MCF 10A (cell line): ENCODE measurements at regions of chr17 and their contacts with region 1.

Region 1: DNA sequence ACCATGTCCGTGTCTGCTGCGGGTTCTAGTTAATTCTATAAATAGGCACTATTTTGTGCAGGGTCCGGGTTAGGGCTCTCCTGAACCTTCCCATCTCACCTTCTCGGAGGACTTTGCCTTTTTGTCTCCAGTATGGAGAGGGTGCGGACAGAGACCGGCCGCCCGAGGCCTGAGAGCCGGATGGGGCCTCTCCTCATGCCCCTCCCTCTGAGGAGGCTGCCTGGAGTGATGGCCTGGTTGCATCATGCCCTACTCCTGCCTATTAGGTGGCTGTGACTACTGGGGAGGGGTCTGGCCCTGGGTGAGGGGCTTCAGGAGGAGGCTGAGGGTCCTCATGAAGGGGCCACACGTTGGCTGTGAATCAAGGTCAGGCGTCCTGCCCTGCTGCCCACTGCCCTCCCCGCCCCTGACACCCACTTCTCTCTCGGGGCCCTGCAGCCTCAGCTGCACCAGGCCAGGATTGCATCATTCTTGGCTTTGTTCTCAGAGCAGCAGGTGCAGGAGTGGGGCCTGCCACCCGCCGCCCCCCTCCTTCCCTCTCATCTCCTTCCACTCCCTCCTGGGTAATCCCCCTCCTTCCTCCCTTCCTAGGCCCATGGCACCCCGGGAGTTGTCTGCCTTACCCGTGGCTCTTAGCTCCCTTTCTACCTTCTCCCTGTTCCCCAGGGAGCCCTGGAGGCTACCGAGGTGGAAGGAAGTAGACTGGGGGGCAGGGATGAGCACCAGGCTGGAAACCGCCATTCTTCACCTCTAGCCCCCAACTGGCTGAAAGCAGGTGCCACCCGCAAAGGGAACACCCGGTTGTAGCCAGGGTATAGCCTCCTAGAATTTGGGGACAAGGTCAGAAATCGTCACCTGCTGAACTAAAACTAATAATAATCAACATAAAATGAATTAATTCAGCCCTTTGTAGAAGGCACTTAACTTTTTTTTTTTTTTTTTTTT is 12.7 kb upstream of the ARHGAP23 start:
- DNase-seq: peak; percentile 70
- H3K4me3 Mint-ChIP-seq: peak overlapping the region; percentile 47
- H3K27ac Mint-ChIP-seq: no peak overlapping the region
- H3K4me1 Mint-ChIP-seq: peaks cover 14% of the 10 kb centered on the region
- H3K27me3 Mint-ChIP-seq: peaks cover 21% of the 10 kb centered on the region
- CTCF ChIP-seq: no peak

Region 2: DNA sequence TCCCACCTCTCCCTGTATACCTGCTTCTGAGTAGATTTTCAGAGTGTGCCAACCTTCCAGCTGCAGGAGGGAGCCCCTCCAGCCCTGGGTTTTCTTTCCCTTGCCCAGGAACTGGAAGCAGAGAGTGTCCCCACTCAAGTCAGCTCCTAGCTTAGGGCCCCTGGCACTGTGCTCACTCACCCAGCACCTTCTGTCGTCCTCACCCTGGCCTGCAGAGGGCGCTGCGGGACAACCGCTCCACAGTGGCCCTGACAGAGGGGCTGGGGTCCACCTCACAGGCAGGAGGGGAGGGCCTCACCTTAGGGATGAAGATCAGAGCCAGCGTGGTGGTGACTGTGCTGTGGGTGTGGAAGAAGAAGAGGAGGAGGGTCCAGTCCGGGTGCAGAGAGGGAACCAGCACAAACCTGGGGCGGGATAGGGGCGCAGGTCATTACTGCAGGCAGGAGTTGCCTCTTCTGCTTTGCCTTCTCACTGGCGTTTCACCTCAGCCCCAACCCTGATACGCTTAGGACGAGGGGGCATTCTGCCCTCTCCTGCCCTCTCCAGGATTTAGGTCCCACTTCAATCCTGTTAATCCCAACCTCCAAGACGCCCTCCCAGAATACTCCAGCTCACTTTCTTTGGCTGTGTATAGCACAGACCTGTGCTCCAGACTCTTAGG is 81.8 kb before region 1 on chr17:
- CTCF ChIA-PET with region 1: interaction called, 12 read pairs
- POLR2A ChIA-PET with region 1: no interaction called
- intact Hi-C with region 1: no loop called
- DNase-seq: peak; percentile 54
- H3K4me3 Mint-ChIP-seq: no peak overlapping the region
- H3K27ac Mint-ChIP-seq: peak overlapping the region; percentile 3
- H3K4me1 Mint-ChIP-seq: peaks cover 3% of the 10 kb centered on the region
- H3K27me3 Mint-ChIP-seq: peaks cover 12% of the 10 kb centered on the region
- CTCF ChIP-seq: peak; percentile 73

Region 3: GRCh38 chr17:38341035-38341721 is 74.3 kb before region 1 on chr17:
- CTCF ChIA-PET with region 1: interaction called, 114 read pairs
- POLR2A ChIA-PET with region 1: no interaction called
- intact Hi-C with region 1: no loop called
- DNase-seq: peak; percentile 44
- H3K4me3 Mint-ChIP-seq: no peak overlapping the region
- H3K27ac Mint-ChIP-seq: no peak overlapping the region
- H3K4me1 Mint-ChIP-seq: no peaks in the 10 kb centered on the region
- H3K27me3 Mint-ChIP-seq: peaks cover 10% of the 10 kb centered on the region
- CTCF ChIP-seq: no peak

Region 4: DNA sequence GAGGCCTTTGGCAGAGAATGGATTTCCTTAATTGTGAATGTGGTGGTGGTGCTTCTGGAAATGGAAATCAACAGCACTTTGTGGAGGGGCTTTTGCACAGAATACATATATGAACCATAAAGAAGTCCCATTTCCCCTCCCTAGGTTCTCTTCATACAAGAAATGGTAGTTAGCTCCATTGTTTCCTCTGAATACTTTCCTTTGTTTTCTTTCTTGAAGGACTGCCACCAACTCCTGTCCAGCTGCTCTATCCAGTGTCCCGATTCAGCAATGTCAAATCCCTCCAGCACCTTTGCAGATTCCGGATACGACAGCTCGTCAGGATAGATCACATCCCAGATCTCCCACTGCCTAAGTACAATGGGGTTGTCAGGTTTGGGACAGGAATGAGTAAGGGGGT is 20.4 kb before region 1 on chr17:
- CTCF ChIA-PET with region 1: interaction called, 11 read pairs
- POLR2A ChIA-PET with region 1: no interaction called
- intact Hi-C with region 1: no loop called
- DNase-seq: no peak
- H3K4me3 Mint-ChIP-seq: no peak overlapping the region
- H3K27ac Mint-ChIP-seq: no peak overlapping the region
- H3K4me1 Mint-ChIP-seq: no peaks in the 10 kb centered on the region
- H3K27me3 Mint-ChIP-seq: no peaks in the 10 kb centered on the region
- CTCF ChIP-seq: no peak

Region 5: DNA sequence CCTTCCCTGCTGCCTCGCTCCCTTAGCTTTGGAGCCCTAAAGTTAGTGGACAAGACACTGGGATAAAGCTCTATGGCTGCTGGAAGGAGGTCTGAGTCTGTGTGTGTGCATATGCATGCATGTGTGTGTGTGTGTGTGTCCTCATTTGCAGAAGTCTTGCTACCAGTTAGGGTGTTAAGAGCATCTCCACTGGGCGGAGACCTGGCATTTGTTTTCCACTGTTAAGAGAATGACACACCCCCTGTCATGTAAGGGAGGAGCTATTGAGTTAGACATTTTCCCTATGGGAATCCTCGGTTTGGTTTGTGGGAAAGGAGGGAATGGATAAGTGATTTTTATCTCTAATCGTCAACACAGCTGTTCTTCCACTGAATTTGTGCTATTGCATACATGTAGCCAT is 12.0 kb before region 1 on chr17:
- CTCF ChIA-PET with region 1: interaction called, 12 read pairs
- POLR2A ChIA-PET with region 1: interaction called, 3 read pairs
- intact Hi-C with region 1: no loop called
- DNase-seq: peak; percentile 15
- H3K4me3 Mint-ChIP-seq: no peak overlapping the region
- H3K27ac Mint-ChIP-seq: no peak overlapping the region
- H3K4me1 Mint-ChIP-seq: no peaks in the 10 kb centered on the region
- H3K27me3 Mint-ChIP-seq: no peaks in the 10 kb centered on the region
- CTCF ChIP-seq: no peak

Region 6: GRCh38 chr17:38469875-38470274 is 54.4 kb after region 1 on chr17:
- CTCF ChIA-PET with region 1: no interaction called
- POLR2A ChIA-PET with region 1: no interaction called
- intact Hi-C with region 1: no loop called
- DNase-seq: peak; percentile 49
- H3K4me3 Mint-ChIP-seq: no peak overlapping the region
- H3K27ac Mint-ChIP-seq: no peak overlapping the region
- H3K4me1 Mint-ChIP-seq: peaks cover 39% of the 10 kb centered on the region
- H3K27me3 Mint-ChIP-seq: no peaks in the 10 kb centered on the region
- CTCF ChIP-seq: no peak